Activated CD8-positive, alpha-beta T cell treated with anti-CD3 and anti-CD28 coated beads for 36 hours (primary cell): ENCODE measurements at regions of chr15 and their contacts with region 1.

Region 1: GRCh38 chr15:78149068-78149804 is at the start of gene IDH3A:
- DNase-seq: peak; percentile 100
- ATAC-seq: peak; percentile 98
- H3K4me3 Mint-ChIP-seq: peak within 1 kb of the TSS; percentile 96
- H3K27ac Mint-ChIP-seq: peak within 1 kb of the TSS; percentile 93
- H3K4me1 Mint-ChIP-seq: peaks cover 39% of the 10 kb centered on the region
- H3K27me3 Mint-ChIP-seq: no peaks in the 10 kb centered on the region
- CTCF ChIP-seq: no peak
- total RNA-seq, gene IDH3A: 106 to 110 TPM

Region 2: DNA sequence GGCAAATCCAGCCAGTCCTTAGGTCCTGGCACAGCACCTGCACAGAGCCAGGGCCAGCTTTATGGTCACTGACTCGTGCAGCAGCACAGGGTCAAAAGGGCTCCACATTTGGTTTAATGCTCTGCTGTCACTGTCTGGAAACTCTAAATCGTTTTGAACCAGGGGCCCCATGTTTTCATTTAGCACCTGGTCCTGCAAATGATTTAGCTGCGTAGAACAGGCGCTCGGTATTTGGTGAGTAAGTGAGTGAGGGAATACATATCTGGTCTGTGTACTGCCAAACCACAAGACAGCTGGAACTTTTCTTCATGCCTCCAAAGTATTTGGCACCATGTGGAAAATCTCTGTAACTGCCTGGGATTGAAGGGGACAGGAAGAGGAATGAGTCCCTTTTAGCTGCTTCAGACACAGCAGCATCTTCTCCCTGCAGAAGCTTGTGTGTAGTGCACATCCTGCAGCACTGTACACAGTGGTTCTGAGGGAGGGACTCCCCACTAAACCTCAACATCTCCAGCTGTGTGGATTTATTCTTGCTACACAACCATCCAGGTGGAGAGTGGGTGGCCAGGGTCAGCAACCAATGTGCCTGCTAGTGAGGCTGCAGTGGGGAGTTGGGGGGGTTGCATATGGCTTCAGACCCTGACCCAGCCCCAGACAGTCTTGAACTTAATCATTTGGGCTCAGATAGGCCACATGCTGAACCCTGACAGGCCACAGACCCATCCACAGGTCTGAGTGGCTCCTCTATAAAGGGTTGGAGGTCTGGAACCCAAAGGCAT is 55.8 kb before region 1 on chr15:
- CTCF ChIA-PET with region 1: no interaction called
- POLR2A ChIA-PET with region 1: no interaction called
- intact Hi-C with region 1: no loop called
- DNase-seq: peak; percentile 2
- ATAC-seq: no peak
- H3K4me3 Mint-ChIP-seq: no peak overlapping the region
- H3K27ac Mint-ChIP-seq: no peak overlapping the region
- H3K4me1 Mint-ChIP-seq: peaks cover 4% of the 10 kb centered on the region
- H3K27me3 Mint-ChIP-seq: no peaks in the 10 kb centered on the region
- CTCF ChIP-seq: no peak

Region 3: DNA sequence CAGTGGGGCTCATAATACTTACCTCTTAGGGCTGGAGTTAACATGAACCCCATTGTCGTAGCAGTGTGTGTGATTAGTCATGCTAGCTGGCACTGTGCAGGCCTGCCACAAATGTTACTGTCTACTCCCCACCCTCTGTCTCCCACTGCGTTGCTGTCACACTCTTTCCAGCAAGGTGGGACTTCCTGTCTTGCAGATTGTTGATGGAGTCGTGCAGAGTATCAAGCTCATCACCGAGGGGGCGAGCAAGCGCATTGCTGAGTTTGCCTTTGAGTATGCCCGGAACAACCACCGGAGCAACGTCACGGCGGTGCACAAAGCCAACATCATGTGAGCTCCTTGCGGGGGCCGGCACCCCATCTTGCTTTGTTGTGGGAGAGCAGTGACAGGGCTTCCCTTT is 12.8 kb after region 1 on chr15:
- CTCF ChIA-PET with region 1: interaction called, 4 read pairs
- POLR2A ChIA-PET with region 1: interaction called, 13 read pairs
- intact Hi-C with region 1: no loop called
- DNase-seq: peak; percentile 68
- ATAC-seq: peak; percentile 96
- H3K4me3 Mint-ChIP-seq: no peak overlapping the region
- H3K27ac Mint-ChIP-seq: peak overlapping the region; percentile 65
- H3K4me1 Mint-ChIP-seq: peaks cover 6% of the 10 kb centered on the region
- H3K27me3 Mint-ChIP-seq: no peaks in the 10 kb centered on the region
- CTCF ChIP-seq: no peak